Mammary epithelial cell (primary cell): ENCODE measurements at regions of chr22 and their contacts with region 1.

Region 1: GRCh38 chr22:24768537-24769374 is 5.8 kb downstream of the PIWIL3 start:
- DNase-seq: peak; percentile 29
- H3K4me3 ChIP-seq: no peak overlapping the region
- H3K27ac ChIP-seq: no peak overlapping the region
- H3K4me1 ChIP-seq: no peaks in the 10 kb centered on the region
- H3K27me3 ChIP-seq: no peaks in the 10 kb centered on the region
- CTCF ChIP-seq: peak; percentile 83 to 93

Region 2: GRCh38 chr22:24834845-24835570 is 66.3 kb after region 1 on chr22:
- CTCF ChIA-PET with region 1: no interaction called
- dilution Hi-C with region 1: no loop called
- in situ Hi-C with region 1: loop called in 1 of 2 experiments (anchors 10 kb)
- intact Hi-C with region 1: loop called (anchors 1 kb)
- DNase-seq: peak; percentile 48
- H3K4me3 ChIP-seq: no peak overlapping the region
- H3K27ac ChIP-seq: no peak overlapping the region
- H3K4me1 ChIP-seq: no peaks in the 10 kb centered on the region
- H3K27me3 ChIP-seq: no peaks in the 10 kb centered on the region
- CTCF ChIP-seq: peak; percentile 37 to 40

Region 3: DNA sequence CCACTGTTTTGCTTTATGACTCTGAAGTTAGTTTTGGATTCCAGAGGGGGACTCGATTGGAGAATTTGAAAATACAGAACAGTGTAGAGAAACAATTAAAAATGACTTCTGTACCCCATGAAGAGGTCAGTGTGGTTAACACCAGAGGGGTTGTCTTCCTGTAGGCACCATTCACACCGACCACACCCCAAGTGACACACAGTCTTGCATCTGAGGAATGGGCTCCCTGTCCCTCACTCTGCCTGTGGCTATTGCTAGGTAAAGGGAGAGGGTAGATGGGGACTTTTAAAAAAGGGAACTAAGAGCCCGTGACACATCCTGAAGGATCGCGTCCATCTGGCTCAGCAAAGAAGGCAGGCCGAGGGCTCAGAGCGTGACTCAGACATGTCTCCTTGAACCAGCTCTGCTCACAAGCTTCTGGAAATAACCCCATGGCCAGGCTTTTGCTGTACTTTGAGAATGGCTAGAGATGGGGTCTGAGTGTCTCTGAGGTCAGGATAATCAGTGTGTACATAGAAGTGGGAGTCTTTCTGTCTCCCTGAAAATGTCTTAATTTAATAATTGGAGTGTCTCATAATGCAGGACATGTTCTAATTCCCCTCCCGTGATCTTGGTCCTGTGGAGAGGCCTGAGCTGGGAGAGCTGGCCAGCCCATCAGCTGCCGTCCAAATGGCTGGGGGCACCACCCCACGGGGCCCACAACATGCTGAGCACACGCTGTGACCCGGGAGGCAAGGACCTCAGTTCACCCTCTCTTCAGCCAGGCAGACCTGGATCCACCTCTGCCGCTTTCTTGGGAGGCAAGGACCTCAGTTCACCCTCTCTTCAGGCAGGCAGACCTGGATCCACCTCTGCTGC is 76.5 kb after region 1 on chr22:
- CTCF ChIA-PET with region 1: interaction called, 8 read pairs
- dilution Hi-C with region 1: loop called (anchors 5 kb)
- in situ Hi-C with region 1: loop called (anchors 5 to 10 kb)
- intact Hi-C with region 1: loop called (anchors 1 kb)
- DNase-seq: no peak
- H3K4me3 ChIP-seq: no peak overlapping the region
- H3K27ac ChIP-seq: no peak overlapping the region
- H3K4me1 ChIP-seq: peaks cover 4% of the 10 kb centered on the region
- H3K27me3 ChIP-seq: no peaks in the 10 kb centered on the region
- CTCF ChIP-seq: no peak

Region 4: DNA sequence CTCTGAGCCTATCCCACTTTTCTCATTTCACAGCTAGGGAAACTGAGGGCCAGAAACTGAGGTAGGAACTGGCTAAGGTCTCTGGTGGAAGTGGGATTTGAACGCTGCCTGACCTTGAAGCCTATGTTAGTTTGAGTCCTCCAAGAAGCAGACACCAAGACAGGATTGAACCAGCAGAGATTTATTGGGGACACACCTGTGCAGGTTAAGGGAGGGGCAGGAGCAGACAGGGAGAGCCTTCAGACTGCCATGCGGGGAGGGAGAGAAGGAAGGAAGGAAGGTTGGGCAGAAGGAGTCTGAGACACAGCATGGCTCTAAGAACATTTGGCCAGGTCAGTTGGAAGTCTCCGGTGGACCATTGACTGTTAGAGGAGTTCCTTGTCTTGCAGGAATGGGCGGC is 96.8 kb after region 1 on chr22:
- CTCF ChIA-PET with region 1: no interaction called
- dilution Hi-C with region 1: no loop called
- in situ Hi-C with region 1: no loop called
- intact Hi-C with region 1: no loop called
- DNase-seq: no peak
- H3K4me3 ChIP-seq: no peak overlapping the region
- H3K27ac ChIP-seq: no peak overlapping the region
- H3K4me1 ChIP-seq: no peaks in the 10 kb centered on the region
- H3K27me3 ChIP-seq: no peaks in the 10 kb centered on the region
- CTCF ChIP-seq: no peak

Region 5: GRCh38 chr22:24938741-24939341 is 170.1 kb after region 1 on chr22:
- CTCF ChIA-PET with region 1: no interaction called
- dilution Hi-C with region 1: no loop called
- in situ Hi-C with region 1: no loop called
- intact Hi-C with region 1: loop called (anchors 5 kb)
- DNase-seq: peak; percentile 48
- H3K4me3 ChIP-seq: no peak overlapping the region
- H3K27ac ChIP-seq: no peak overlapping the region
- H3K4me1 ChIP-seq: peaks cover 17% of the 10 kb centered on the region
- H3K27me3 ChIP-seq: no peaks in the 10 kb centered on the region
- CTCF ChIP-seq: peak; percentile 70 to 76

Region 6: DNA sequence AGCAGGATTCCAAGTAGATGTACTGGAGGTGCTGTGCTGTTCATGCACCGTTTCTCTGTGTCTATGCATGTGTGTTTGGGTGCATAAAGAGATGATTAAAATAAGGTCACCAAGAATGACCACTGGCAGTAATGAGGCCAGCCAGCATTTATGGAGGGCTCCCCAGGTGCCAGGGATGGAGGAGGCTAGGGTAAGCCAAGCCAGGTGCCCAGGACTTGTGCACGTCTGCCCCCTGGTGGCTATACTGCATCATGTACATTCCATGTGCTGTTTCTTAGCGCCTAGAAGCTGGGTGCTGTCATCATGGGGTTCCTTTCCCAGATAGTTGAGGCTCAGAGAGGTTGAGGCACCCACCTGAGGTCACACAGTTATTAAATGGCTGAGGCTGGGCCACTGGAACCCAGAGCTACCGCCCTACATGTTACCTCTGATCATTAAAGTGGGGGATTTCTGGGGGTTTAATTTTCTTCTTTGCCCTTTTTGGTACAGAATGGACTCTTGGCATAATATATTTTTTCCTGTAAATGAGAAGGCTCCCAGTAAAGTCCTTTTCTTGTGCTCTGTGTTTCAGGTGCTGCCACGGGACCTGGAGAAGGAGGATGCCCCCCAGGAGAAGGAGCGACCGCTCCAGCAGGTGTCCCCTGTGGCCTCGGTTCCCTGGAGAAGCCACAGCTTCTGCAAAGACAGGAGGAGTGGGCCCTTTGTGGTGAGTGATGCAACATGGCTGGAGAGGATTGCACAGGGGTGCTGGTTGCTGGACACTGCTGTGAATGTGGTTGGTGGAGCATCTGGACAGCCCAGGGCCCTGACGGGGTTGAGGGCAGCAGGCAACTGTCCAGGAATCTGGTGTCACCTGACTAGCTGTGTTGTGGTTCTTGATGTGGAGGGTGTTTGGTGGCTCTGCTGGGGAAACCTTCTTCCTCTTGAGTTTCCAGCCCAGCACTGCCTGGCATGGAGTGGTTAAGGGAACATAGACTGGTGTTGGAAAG is 280.2 kb after region 1 on chr22:
- CTCF ChIA-PET with region 1: no interaction called
- dilution Hi-C with region 1: no loop called
- in situ Hi-C with region 1: loop called in 1 of 2 experiments (anchors 25 kb)
- intact Hi-C with region 1: loop called (anchors 1 kb)
- DNase-seq: peak; percentile 45
- H3K4me3 ChIP-seq: no peak overlapping the region
- H3K27ac ChIP-seq: no peak overlapping the region
- H3K4me1 ChIP-seq: no peaks in the 10 kb centered on the region
- H3K27me3 ChIP-seq: no peaks in the 10 kb centered on the region
- CTCF ChIP-seq: peak; percentile 84 to 94

Region 7: DNA sequence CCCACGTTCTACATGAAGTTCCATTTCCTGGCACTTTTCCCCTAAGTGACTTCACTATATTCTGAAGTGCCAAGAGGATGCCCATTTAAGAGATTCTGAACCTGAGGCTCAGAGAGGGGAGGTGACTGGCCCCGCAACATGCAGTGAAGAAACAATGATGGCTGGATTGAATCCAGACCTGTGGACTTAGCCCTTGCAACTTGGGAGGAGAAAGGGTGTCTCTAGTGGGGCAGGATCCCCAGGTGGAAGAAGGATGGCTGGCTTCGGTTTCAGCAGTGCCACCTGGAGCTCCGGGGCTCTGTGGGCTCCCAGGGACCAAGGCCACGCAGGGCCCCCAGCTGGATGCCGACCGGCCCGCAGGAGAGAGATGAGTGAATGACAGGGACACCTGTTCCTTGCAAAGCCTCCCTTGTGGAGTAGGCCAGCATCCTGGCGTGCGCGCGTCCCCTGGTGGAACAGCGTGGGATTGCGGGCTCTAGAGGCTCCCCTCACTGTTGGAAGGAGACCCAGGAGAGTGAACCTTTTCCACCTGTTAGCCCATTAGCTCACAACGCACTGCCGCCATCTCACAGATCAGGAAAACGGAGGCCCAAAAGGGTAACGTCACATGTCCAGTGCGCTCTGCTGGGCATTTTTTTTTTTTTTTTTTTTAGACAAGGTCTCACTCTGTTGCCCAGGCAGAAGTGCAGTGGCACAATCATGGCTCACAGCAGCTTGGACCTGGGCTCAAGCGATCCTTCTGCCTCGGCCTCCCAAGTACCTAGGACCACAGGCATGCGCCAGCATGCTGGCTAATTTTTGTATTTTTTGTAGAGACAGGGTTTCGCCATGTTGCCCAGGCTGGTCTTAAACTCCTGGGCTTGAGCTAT is 288.5 kb after region 1 on chr22:
- CTCF ChIA-PET with region 1: interaction called, 27 read pairs
- dilution Hi-C with region 1: no loop called
- in situ Hi-C with region 1: no loop called
- intact Hi-C with region 1: no loop called
- DNase-seq: peak; percentile 30
- H3K4me3 ChIP-seq: no peak overlapping the region
- H3K27ac ChIP-seq: no peak overlapping the region
- H3K4me1 ChIP-seq: peaks cover 9% of the 10 kb centered on the region
- H3K27me3 ChIP-seq: no peaks in the 10 kb centered on the region
- CTCF ChIP-seq: peak; percentile 90 to 92